ENCODE measurements at regions of chr19 and their contacts with region 1.

Region 1: DNA sequence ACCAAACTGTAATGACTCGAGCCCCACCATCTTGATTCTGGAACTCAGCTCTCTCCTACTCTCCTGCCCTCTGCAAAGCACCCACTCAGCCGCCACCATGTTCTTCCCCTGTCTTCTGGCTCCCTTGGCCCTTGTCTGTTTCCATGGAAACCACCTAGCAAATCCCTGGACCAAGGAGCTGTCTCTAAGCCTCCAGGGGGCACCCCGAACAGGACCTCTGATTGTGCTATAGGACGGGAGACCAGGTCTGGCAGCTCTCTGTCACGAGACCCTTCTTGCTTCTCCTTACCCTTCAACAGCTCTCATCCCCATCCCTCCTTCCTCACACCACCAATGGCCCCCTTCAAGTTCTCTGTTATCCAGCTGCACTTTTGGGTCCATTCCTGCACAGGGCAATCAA is 277.7 kb upstream of the ZNF507 start:
- DNase-seq: peak; percentile 68

Region 2: DNA sequence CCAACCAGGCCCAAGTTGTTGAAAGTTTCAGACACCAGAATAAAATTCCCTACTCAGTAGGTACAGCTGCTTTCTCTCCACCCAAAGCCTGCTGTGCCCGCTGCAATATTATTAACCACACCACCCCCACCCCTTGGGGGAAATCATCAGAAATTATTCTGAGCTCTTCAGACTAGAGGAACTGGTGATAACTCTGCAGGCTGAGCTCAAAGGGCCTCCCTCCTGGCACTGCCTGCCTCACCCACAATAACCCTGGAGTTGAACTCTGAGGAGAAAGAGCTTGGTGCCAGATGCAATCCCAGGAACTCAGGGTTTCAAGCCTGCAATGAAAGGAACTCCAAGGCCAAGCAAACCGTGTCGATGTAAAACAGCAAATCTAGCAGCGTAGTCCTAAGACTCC is 103.9 kb before region 1 on chr19:
- intact Hi-C with region 1: no loop called
- DNase-seq: no peak

Region 3: GRCh38 chr19:32405431-32406161 is 337.9 kb after region 1 on chr19 and contains the start of gene DPY19L3:
- intact Hi-C with region 1: no loop called
- DNase-seq: peak; percentile 99
- total RNA-seq, gene DPY19L3: 21.6 to 29.0 TPM

Region 4: DNA sequence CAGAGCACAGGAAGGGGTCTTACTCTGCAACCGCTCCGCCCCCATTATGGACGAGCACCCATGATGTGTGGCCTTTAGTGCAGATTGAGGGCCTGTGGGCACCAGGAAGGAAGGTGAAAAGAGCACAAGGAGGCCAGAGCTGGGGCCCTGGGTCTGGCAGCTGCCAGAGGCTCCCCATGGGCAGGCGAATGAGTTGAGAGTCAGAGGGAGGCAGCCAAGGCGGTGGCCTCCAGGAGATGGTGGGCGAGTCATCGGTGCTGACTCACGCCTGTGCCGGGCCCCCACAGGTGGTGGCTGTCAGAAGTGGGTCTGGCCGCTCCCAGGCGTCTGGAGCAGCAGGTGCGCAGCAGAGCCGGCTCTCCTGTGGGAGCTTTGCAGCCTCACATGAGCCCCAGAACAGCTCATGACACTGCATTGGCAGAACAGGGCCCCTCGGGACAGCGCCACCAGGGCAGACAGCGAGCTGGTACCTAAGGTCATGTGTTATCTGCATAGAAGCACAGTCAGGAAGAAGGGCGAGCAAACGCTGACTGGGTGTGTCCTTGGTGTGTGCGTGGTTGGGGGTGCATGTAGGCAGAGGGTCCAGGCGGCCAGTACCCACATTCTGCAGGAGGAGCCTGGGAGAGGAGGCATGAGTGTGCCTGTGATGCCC is 1622.8 kb after region 1 on chr19:
- intact Hi-C with region 1: loop called in 1 of 2 experiments (anchors 10 kb)
- DNase-seq: peak; percentile 78

Measured in posterior vena cava (tissue), 2 donors.